ENCODE measurements at regions of chr12 and their contacts with region 1.

Region 1: DNA sequence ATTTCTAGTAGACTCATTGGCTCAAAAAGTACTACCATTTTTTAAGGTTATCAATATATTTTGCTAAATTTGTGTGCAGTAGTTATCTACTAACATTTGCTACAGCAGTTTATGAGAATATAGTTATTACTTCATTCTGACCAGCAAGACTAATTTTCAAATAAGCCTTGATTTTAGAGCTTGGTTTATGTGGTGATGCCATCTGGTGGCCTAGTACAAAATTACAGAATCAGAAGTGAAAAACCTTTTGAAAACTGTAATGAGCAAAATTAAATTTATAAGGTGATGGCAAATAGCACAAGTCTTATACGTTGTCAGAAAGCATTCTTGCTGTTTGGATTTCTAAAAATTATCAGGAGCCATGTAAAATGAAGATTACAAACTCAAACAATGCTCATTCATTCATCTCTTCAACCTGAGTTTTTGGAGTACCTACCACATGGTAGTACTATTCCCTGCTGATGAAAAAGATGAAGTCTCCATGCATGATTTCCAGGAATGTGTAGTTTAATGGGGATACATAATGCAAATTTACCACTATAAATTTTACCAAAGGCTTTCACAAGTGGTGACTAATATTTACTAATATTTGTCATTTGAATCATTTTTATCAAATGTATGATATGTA is 51.0 kb downstream of the MAGOHB start:
- DNase-seq: no peak
- H3K4me3 ChIP-seq: no peak overlapping the region
- H3K27ac ChIP-seq: no peak overlapping the region
- H3K4me1 ChIP-seq: no peaks in the 10 kb centered on the region
- H3K27me3 ChIP-seq: no peaks in the 10 kb centered on the region
- CTCF ChIP-seq: peak; percentile 35 to 75 (median 48)
- EP300 ChIP-seq: no peak
- POLR2A ChIP-seq: no peak

Region 2: GRCh38 chr12:10235761-10236631 is 326.4 kb before region 1 on chr12:
- intact Hi-C with region 1: loop called in 2 of 4 experiments (anchors 5 kb)
- DNase-seq: peak in 4 of 5 donors; percentile 22 to 52 (median 40)
- H3K4me3 ChIP-seq: no peak overlapping the region
- H3K27ac ChIP-seq: no peak overlapping the region
- H3K4me1 ChIP-seq: no peaks in the 10 kb centered on the region
- H3K27me3 ChIP-seq: no peaks in the 10 kb centered on the region
- CTCF ChIP-seq: peak; percentile 73 to 82 (median 79)
- EP300 ChIP-seq: no peak
- POLR2A ChIP-seq: no peak

Region 3: DNA sequence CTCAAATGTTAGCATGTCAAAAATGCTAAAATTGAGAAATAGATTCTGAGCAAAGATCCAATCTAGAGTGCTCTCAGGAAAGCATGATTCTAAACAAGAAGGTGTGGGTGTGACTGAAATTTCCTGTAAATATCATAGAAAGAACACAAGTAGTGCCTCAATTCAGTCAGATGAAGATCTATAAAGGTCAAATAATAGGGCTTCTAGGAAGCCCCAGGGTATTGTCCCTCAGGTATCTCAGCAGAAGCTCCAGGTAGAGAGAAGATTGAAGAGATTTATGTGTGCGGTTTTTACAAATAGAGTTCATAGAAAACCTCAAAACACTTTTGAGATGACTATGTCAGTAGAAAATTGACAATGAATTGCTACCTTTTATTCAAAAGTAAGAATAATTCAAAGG is 241.8 kb before region 1 on chr12:
- intact Hi-C with region 1: loop called in 1 of 4 experiments (anchors 10 kb)
- DNase-seq: no peak
- H3K4me3 ChIP-seq: no peak overlapping the region
- H3K27ac ChIP-seq: no peak overlapping the region
- H3K4me1 ChIP-seq: no peaks in the 10 kb centered on the region
- H3K27me3 ChIP-seq: no peaks in the 10 kb centered on the region
- CTCF ChIP-seq: no peak
- EP300 ChIP-seq: no peak
- POLR2A ChIP-seq: no peak

Region 4: GRCh38 chr12:10331642-10332239 is 230.7 kb before region 1 on chr12:
- intact Hi-C with region 1: loop called (anchors 5 to 10 kb)
- DNase-seq: no peak
- H3K4me3 ChIP-seq: no peak overlapping the region
- H3K27ac ChIP-seq: no peak overlapping the region
- H3K4me1 ChIP-seq: no peaks in the 10 kb centered on the region
- H3K27me3 ChIP-seq: no peaks in the 10 kb centered on the region
- CTCF ChIP-seq: peak; percentile 28 to 68 (median 46)
- EP300 ChIP-seq: no peak
- POLR2A ChIP-seq: no peak

Region 5: DNA sequence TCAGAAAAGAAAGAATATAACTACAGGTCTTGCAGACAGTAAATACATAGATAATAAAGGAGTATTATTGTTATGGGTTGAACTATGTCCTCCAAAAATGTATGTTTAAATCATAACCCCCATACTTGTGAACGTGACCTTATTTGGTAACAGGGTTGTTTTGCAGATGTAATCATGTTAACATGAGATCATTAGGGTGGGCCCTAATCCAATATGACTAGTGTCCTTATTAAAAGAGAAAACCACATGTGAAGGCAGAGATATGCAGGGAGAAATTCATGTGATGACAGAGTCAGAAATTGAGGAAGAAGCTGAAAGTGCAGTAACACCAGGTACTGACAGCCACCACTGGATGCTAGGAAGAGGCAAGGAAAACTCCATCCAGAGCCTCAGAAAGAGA is 22.0 kb after region 1 on chr12:
- intact Hi-C with region 1: no loop called
- DNase-seq: no peak
- H3K4me3 ChIP-seq: no peak overlapping the region
- H3K27ac ChIP-seq: no peak overlapping the region
- H3K4me1 ChIP-seq: no peaks in the 10 kb centered on the region
- H3K27me3 ChIP-seq: no peaks in the 10 kb centered on the region
- CTCF ChIP-seq: no peak
- EP300 ChIP-seq: no peak
- POLR2A ChIP-seq: no peak

Region 6: GRCh38 chr12:10690906-10691305 is 128.5 kb after region 1 on chr12:
- intact Hi-C with region 1: no loop called
- DNase-seq: no peak
- H3K4me3 ChIP-seq: no peak overlapping the region
- H3K27ac ChIP-seq: no peak overlapping the region
- H3K4me1 ChIP-seq: no peaks in the 10 kb centered on the region
- H3K27me3 ChIP-seq: no peaks in the 10 kb centered on the region
- CTCF ChIP-seq: no peak
- EP300 ChIP-seq: no peak
- POLR2A ChIP-seq: no peak